ENCODE measurements at regions of chr1 and their contacts with region 1.

Region 1: DNA sequence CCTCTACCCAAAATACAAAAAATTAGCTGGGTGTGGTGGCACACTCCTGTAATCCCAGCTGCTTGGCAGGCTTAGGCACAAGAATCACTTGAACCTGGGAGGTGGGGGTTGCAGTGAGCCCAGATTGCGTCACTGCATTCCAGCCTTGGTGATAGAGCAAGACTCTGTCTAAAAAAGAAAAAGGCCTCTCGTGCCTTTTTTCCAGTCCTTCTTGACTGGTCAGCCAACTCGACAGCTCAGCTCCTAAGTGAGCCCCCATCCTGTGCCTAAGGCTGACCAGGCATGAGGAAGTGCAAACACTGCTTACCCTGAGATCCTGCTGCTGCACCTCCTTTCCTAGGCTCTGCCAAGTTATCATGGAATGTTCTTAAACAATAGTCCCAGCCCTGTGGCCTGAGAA is 10.1 kb upstream of the PROK1 start:
- DNase-seq: peak; percentile 72 to 95
- H3K4me3 ChIP-seq: no peak overlapping the region
- H3K27ac ChIP-seq: peak overlapping the region; percentile 28
- H3K4me1 ChIP-seq: peaks cover 23% of the 10 kb centered on the region
- H3K27me3 ChIP-seq: no peaks in the 10 kb centered on the region
- CTCF ChIP-seq: no peak

Region 2: DNA sequence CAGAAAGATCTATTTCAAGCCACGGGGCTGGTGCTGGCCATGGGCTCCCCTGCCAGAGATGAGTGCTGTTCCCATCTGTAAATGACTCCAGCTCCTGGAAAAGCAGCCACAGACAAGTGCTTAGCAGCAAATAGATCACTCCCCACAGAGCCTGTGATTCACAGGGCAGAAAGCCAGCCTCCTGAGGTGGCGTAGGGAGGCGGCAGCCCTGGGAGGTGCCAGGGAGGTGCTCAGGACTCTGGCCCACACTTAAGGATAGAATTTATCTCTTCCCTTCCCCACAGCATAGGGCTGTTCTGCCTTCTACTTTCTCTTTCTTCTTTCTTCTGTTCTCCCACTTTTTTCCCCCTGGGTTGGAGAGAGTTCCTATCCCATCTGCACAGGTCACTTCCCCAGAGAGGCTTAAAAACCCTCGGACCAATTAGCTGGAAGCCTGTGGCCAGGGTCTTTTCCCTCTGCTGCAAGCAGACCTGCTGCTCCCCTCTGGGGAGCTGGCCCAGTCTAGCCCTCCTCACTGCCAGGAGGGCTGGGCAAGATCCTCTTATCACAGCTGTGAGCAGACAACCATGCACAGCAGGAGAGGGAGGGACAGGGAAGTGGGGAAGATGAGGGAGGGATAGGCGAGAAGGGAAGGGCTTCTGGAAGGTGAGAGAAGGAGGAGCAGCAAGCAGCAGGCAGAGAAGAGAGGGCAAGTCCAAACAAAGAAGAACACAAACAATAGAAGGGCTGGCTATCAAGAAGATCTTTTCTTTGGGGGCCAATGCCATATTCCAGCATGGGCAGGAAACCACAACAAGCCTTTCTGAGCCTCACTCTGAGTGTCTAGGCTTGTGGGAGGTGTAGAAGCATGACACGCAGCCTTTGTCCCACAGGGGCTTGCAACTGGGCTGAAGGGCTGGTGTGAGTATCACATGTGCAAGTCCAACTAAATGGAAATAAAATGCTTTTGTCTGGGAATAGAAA is 1507.6 kb after region 1 on chr1:
- CTCF ChIA-PET with region 1: interaction called, 18 read pairs
- POLR2A ChIA-PET with region 1: no interaction called
- intact Hi-C with region 1: no loop called
- DNase-seq: no peak
- H3K4me3 ChIP-seq: no peak overlapping the region
- H3K27ac ChIP-seq: no peak overlapping the region
- H3K4me1 ChIP-seq: no peaks in the 10 kb centered on the region
- H3K27me3 ChIP-seq: peaks cover 74% of the 10 kb centered on the region
- CTCF ChIP-seq: no peak

Measured in PC-9 (cell line).